SK-N-SH (cell line): ENCODE measurements at regions of chr17 and their contacts with region 1.

Region 1: DNA sequence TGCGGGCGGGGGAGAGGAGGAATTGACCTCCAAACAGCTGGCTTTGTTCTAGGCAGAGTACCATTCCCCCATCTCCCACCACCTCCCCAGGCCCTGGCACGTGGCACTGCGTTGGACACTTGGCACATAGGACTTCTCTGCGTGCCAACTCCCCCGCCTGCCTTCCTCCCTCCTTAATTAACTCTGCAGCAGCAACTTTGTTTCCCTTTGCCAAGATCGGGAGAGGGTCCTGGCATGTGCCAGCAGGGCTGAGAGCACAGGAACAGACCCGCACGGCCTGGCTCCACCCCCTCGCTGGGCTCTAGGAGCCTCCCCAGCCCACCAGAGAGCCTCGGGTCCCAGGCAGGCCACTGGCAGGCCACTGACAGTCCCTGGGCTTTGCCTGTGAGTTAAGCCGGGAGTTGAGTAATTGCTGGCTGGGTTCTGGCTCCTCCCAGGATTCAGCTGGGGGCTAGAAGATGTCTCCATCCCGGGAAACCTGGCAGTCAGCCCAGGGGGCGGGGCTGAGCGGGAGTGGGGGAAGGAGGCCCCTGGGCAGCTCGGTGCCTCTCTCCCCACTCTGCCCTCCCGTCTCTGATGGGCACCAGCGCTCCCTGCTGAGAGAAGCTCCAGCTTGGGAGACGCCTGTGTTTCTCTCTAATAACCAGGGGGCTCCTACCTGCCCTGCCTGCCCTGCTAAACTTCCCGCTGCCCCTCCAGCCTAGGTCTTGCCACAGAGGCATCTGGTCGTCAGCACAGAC is 224.0 kb upstream of the TNRC6C start:
- DNase-seq: peak; percentile 99
- H3K4me3 ChIP-seq: peak overlapping the region in 1 of 2 experiments; percentile 15; a peak in 2 of 4 replicates
- H3K27ac ChIP-seq: peak overlapping the region in 1 of 2 experiments; percentile 93; a peak in 2 of 4 replicates
- H3K4me1 ChIP-seq: peaks cover 12 to 35% of the 10 kb centered on the region in 2 experiments; a peak in 3 of 4 replicates
- H3K27me3 ChIP-seq: no peaks in the 10 kb centered on the region
- CTCF ChIP-seq: no peak
- EP300 ChIP-seq: peak in 1 of 2 experiments; percentile 76; a peak in 2 of 4 replicates
- RAD21 ChIP-seq: peak; percentile 59

Region 2: DNA sequence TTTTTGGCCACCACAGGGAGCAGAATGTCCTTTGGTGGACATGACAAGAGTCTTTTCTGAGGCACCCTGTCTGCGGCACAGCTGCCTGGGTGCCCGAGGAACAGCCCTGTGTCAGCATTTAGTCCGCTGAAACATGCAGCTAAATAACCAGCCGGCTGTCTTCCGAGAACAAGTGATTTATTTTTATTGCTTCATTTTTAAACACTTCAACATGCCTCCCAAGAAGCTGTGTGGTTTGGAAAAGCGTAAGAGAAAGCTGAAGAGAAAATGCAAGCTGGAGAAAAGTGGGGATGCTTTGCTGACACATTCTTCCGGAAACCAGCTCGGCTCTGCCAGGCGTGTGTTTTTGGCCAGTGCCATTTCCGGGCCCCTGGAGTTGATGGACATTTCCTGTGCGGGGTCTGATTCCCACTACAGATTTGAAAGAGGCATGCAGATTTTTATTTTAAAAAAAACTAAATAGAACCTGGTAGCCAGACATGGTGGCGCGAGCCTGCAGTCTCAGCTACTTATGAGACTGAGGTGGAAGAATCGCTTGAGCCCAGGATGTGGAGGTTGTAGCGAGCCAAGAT is 499.1 kb before region 1 on chr17:
- CTCF ChIA-PET with region 1: no interaction called
- POLR2A ChIA-PET with region 1: no interaction called
- DNase-seq: peak; percentile 71
- H3K4me3 ChIP-seq: peak overlapping the region; percentile 7 to 42; a peak in 3 of 4 replicates
- H3K27ac ChIP-seq: peak overlapping the region; percentile 45 to 81
- H3K4me1 ChIP-seq: peaks cover 3 to 15% of the 10 kb centered on the region in 2 experiments; a peak in 2 of 4 replicates
- H3K27me3 ChIP-seq: no peaks in the 10 kb centered on the region
- CTCF ChIP-seq: no peak
- EP300 ChIP-seq: peak in 1 of 2 experiments; percentile 76; a peak in 2 of 4 replicates
- RAD21 ChIP-seq: no peak

Region 3: GRCh38 chr17:77690271-77691161 is 44.0 kb before region 1 on chr17:
- CTCF ChIA-PET with region 1: interaction called, 4 read pairs
- POLR2A ChIA-PET with region 1: interaction called, 15 read pairs
- DNase-seq: peak; percentile 88
- H3K4me3 ChIP-seq: peak overlapping the region in 1 of 2 experiments; percentile 12; a peak in 1 of 4 replicates
- H3K27ac ChIP-seq: peak overlapping the region in 1 of 2 experiments; percentile 93; a peak in 2 of 4 replicates
- H3K4me1 ChIP-seq: peaks cover 0 to 33% of the 10 kb centered on the region in 2 experiments; a peak in 1 of 4 replicates
- H3K27me3 ChIP-seq: peaks cover 48% of the 10 kb centered on the region; the same call in 1 of the 2 replicates
- CTCF ChIP-seq: no peak
- EP300 ChIP-seq: peak in 1 of 2 experiments; percentile 75; a peak in 2 of 4 replicates
- RAD21 ChIP-seq: peak; percentile 8; the same call in 1 of the 2 replicates

Region 4: DNA sequence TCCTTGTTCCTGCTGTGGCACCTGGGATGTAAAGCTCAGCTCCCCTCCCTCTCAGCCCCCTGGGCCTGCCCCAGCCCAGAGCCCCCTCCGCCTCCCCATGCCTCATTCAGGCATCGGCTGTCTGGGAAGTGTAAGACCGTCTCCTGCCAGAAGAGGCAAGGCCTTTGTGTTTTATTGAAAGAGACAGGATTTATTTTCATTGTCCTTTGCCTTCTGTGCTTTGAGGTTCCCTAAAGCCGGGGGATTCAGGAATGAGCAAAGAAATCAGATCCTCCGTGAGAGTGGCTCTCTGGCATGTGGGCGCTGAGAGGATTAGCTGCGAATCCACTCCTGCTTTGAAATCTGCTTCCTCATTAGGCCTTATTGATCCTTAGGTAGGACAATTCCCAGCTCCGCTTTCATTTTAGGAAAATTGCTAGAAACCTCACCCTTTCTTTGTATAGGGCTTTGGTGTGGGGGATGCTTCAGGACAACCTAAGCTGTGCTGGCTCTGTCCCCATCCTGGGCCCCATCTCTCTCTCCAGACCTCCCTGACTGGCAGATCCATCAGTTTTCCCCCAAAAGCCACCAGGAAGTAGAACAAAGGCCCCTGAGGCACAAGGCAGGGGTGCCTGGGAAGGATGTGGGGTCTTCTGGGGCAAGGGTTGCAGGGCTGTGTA is 12.5 kb after region 1 on chr17:
- CTCF ChIA-PET with region 1: interaction called, 13 read pairs
- POLR2A ChIA-PET with region 1: interaction called, 5 read pairs
- DNase-seq: no peak
- H3K4me3 ChIP-seq: no peak overlapping the region
- H3K27ac ChIP-seq: no peak overlapping the region; a peak in 1 of 4 replicates
- H3K4me1 ChIP-seq: peaks cover 0 to 17% of the 10 kb centered on the region in 2 experiments; a peak in 1 of 4 replicates
- H3K27me3 ChIP-seq: peaks cover 24% of the 10 kb centered on the region; the same call in 1 of the 2 replicates
- CTCF ChIP-seq: no peak
- EP300 ChIP-seq: no peak
- RAD21 ChIP-seq: no peak

Region 5: DNA sequence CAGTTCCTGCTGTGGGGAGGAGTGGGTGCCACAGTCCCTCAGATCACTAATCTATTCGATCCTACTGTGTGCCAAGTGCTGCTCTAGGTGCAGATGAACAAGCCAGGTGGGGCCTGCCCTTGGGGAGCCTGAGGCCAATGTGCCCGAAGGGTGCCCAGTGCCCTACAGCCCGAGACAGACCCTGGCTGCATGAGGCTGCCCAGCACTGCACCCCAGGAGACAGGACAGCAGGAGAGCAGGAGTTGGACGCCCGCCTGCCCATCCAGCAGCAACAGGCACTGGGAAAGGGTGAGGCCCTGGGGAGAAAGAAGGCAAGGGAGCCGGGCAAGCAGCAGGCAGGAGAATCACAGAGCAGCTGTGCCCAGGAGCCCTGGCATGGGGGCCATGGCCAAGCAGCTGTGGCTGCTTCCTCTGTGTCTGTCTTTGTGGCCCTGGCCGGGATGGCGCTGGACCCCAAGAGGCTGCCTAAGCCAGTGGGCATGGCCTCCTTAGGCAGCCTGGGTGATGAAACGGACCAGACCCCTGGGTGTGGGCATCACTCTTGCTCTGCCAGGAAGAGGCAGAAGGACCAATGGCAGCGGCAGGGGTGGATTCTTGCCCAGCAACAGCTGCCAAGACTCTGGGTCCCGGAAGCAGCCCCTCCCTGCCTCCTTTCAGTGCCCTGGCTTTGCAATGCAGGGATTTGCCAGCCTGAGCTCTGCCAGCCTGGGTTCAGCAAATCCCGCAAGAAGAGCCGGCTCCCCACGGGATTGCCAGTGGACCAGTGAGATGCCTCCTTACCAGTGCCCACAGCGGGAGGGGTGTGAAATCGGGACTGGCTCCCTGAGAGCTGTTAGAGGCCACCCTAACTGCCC is 44.4 kb after region 1 on chr17:
- CTCF ChIA-PET with region 1: no interaction called
- POLR2A ChIA-PET with region 1: interaction called, 12 read pairs
- DNase-seq: peak; percentile 96
- H3K4me3 ChIP-seq: no peak overlapping the region
- H3K27ac ChIP-seq: peak overlapping the region; percentile 56 to 98
- H3K4me1 ChIP-seq: peaks cover 17 to 52% of the 10 kb centered on the region in 2 experiments
- H3K27me3 ChIP-seq: 0 out of 2 replicates have a peak, but pooled peaks cover under 1% of the 10 kb centered on the region
- CTCF ChIP-seq: no peak
- EP300 ChIP-seq: peak in 1 of 2 experiments; percentile 84; a peak in 2 of 4 replicates
- RAD21 ChIP-seq: no peak

Region 6: GRCh38 chr17:77892469-77893143 is 158.1 kb after region 1 on chr17:
- CTCF ChIA-PET with region 1: no interaction called
- POLR2A ChIA-PET with region 1: no interaction called
- DNase-seq: peak; percentile 77
- H3K4me3 ChIP-seq: 0 out of 4 replicates have a peak overlapping the region, but pooled peaks of 1 of the 2 experiments have one; percentile 27
- H3K27ac ChIP-seq: no peak overlapping the region
- H3K4me1 ChIP-seq: peaks cover 0 to 3% of the 10 kb centered on the region in 2 experiments; a peak in 1 of 4 replicates
- H3K27me3 ChIP-seq: peaks cover 2% of the 10 kb centered on the region; the same call in 1 of the 2 replicates
- CTCF ChIP-seq: peak; percentile 55
- EP300 ChIP-seq: no peak
- RAD21 ChIP-seq: peak; percentile 40; the same call in 1 of the 2 replicates